Activated CD4-positive, alpha-beta T cell treated with anti-CD3 and anti-CD28 coated beads, Interleukin-2, amount 10 ng/mL, durations not matched to agents 24 days and 14 days (primary cell): ENCODE measurements at regions of chr14 and their contacts with region 1.

Region 1: GRCh38 chr14:75982266-75983018 is 647 bp upstream of the TGFB3 start:
- DNase-seq: peak; percentile 94
- H3K4me3 Mint-ChIP-seq: peak overlapping the region; percentile 84
- H3K27ac Mint-ChIP-seq: peak overlapping the region; percentile 74
- H3K4me1 Mint-ChIP-seq: peaks cover 40% of the 10 kb centered on the region
- H3K27me3 Mint-ChIP-seq: peaks cover 14% of the 10 kb centered on the region

Region 2: GRCh38 chr14:75577729-75578101 is 404.7 kb before region 1 on chr14:
- intact Hi-C with region 1: loop called (anchors 1 kb)
- DNase-seq: peak; percentile 91
- H3K4me3 Mint-ChIP-seq: peak overlapping the region; percentile 90
- H3K27ac Mint-ChIP-seq: peak overlapping the region; percentile 85
- H3K4me1 Mint-ChIP-seq: peaks cover 19% of the 10 kb centered on the region
- H3K27me3 Mint-ChIP-seq: peaks cover 3% of the 10 kb centered on the region

Region 3: GRCh38 chr14:75660630-75661494 is 321.6 kb before region 1 on chr14 and contains the starts of genes ERG28 and TTLL5:
- intact Hi-C with region 1: loop called (anchors 2 kb)
- DNase-seq: peak; percentile 99
- H3K4me3 Mint-ChIP-seq: peak within 1 kb of the TSS; percentile 95
- H3K27ac Mint-ChIP-seq: peak within 1 kb of the TSS; percentile 92
- H3K4me1 Mint-ChIP-seq: peaks cover 21% of the 10 kb centered on the region
- H3K27me3 Mint-ChIP-seq: no peaks in the 10 kb centered on the region
- total RNA-seq, gene ERG28: 20.3 and 20.6 TPM in 2 replicates
- total RNA-seq, gene TTLL5: 31.7 and 35.5 TPM in 2 replicates

Region 4: GRCh38 chr14:75709207-75709812 is 273.1 kb before region 1 on chr14:
- intact Hi-C with region 1: loop called (anchors 1 kb)
- DNase-seq: peak; percentile 88
- H3K4me3 Mint-ChIP-seq: no peak overlapping the region
- H3K27ac Mint-ChIP-seq: no peak overlapping the region
- H3K4me1 Mint-ChIP-seq: no peaks in the 10 kb centered on the region
- H3K27me3 Mint-ChIP-seq: no peaks in the 10 kb centered on the region

Region 5: GRCh38 chr14:75794615-75795038 is 187.8 kb before region 1 on chr14:
- intact Hi-C with region 1: no loop called
- DNase-seq: no peak
- H3K4me3 Mint-ChIP-seq: no peak overlapping the region
- H3K27ac Mint-ChIP-seq: no peak overlapping the region
- H3K4me1 Mint-ChIP-seq: no peaks in the 10 kb centered on the region
- H3K27me3 Mint-ChIP-seq: no peaks in the 10 kb centered on the region

Region 6: GRCh38 chr14:75906676-75907280 is 75.7 kb before region 1 on chr14:
- intact Hi-C with region 1: loop called (anchors 1 kb)
- DNase-seq: peak; percentile 89
- H3K4me3 Mint-ChIP-seq: no peak overlapping the region
- H3K27ac Mint-ChIP-seq: no peak overlapping the region
- H3K4me1 Mint-ChIP-seq: no peaks in the 10 kb centered on the region
- H3K27me3 Mint-ChIP-seq: no peaks in the 10 kb centered on the region

Region 7: DNA sequence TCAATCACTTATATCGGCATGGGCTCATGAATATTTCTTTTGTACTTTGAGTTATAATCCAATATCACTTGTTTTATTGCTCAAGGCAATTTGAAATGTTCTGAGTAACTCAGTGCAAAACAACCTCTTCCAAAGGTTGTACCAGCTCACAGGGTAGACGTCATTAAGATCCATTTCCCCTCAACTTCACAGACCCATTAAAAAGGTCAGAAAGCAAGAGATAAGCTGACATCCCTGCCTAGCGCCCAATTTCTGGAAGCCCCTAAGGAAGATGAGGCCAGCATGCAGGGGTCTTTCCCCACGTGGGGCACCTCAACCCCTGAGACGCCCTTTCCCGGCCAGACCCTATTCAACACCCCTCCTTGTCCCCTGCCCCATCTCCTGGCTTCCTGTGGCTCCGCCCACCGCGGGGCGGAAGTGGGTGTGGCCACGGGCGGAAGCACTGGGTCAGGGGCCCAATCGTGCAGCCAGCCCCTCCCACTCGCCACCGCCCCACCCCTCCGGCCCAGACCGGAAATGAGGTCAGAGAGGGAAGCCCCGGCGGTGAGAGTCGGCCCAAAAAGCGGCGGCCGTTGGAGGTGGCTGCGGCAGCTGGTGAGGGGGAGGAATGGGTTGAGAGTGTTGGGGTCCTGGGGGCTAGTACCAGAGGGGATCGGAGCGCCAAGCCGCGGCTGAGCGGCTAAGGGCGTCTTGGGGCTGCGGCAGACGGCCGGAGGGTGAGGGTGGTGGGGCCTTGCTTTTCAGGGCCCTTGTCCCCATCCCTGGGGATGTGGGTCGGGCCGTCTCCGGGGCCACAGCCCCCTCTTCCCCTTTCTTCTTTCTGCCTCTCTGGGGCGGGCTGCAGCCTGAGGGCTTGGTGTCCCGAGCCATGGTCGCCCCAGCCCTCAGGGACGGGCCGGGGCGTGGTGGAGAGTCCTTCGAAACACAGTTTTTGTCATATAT is 169.2 kb after region 1 on chr14 and contains the start of gene GPATCH2L:
- intact Hi-C with region 1: loop called (anchors 10 kb)
- DNase-seq: peak; percentile 99
- H3K4me3 Mint-ChIP-seq: peak within 1 kb of the TSS; percentile 88
- H3K27ac Mint-ChIP-seq: peak within 1 kb of the TSS; percentile 99
- H3K4me1 Mint-ChIP-seq: peaks cover 44% of the 10 kb centered on the region
- H3K27me3 Mint-ChIP-seq: peaks cover 5% of the 10 kb centered on the region
- total RNA-seq, gene GPATCH2L: 60.6 and 61.6 TPM in 2 replicates